Aorta (tissue), 5 donors: ENCODE measurements at regions of chr12 and their contacts with region 1.

Region 1: DNA sequence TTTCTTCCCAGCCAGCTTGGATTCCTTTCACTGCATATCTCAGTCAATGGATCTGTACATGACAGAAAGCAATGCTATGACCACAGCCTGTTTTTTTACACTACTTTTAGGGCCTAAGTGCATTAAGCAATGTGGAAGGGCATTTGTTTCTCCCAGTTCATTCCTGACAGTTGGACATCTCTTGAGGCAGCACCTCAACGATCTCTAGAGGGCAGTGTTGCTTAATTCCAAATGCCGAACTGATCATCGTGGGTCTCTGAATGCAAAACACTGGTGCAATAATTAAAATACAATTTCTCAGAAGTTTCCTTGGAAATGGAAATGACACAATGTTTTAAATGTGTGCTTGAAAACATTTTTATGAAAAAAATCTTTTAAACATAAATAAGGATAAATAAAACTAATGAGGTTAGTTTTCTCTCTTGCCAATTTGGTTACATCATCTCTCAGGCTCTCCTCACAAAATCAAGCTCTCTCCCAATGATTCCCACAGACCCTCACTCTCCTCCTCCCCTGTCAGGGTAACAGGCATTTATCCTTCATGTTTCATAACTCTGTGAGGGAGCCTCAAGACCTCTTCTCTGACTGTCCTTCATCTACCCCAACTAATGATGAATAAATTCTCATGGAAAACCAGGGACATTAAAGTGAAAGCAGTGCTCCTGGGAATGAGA is 192.4 kb upstream of the SLC16A7 start:
- DNase-seq: peak in 1 of 2 donors; percentile 43
- ATAC-seq: peak; percentile 88
- H3K4me3 ChIP-seq: peak overlapping the region in 1 of 2 donors; percentile 54
- H3K27ac ChIP-seq: no peak overlapping the region
- H3K4me1 ChIP-seq: no peaks in the 10 kb centered on the region
- H3K27me3 ChIP-seq: no peaks in the 10 kb centered on the region

Region 2: GRCh38 chr12:59164991-59165718 is 238.2 kb before region 1 on chr12:
- intact Hi-C with region 1: no loop called
- DNase-seq: no peak
- ATAC-seq: no peak
- H3K4me3 ChIP-seq: no peak overlapping the region
- H3K27ac ChIP-seq: no peak overlapping the region
- H3K4me1 ChIP-seq: no peaks in the 10 kb centered on the region
- H3K27me3 ChIP-seq: no peaks in the 10 kb centered on the region

Region 3: GRCh38 chr12:59695379-59695778 is 292.0 kb after region 1 on chr12:
- intact Hi-C with region 1: no loop called
- DNase-seq: no peak
- ATAC-seq: no peak
- H3K4me3 ChIP-seq: no peak overlapping the region
- H3K27ac ChIP-seq: no peak overlapping the region
- H3K4me1 ChIP-seq: no peaks in the 10 kb centered on the region
- H3K27me3 ChIP-seq: no peaks in the 10 kb centered on the region

Region 4: GRCh38 chr12:59808317-59808910 is 405.0 kb after region 1 on chr12:
- intact Hi-C with region 1: loop called in 1 of 2 experiments (anchors 5 kb)
- DNase-seq: no peak
- ATAC-seq: peak; percentile 80
- H3K4me3 ChIP-seq: no peak overlapping the region
- H3K27ac ChIP-seq: no peak overlapping the region
- H3K4me1 ChIP-seq: no peaks in the 10 kb centered on the region
- H3K27me3 ChIP-seq: no peaks in the 10 kb centered on the region

Region 5: GRCh38 chr12:59834659-59835474 is 431.5 kb after region 1 on chr12:
- intact Hi-C with region 1: loop called (anchors 5 to 10 kb)
- DNase-seq: no peak
- ATAC-seq: no peak
- H3K4me3 ChIP-seq: no peak overlapping the region
- H3K27ac ChIP-seq: no peak overlapping the region
- H3K4me1 ChIP-seq: no peaks in the 10 kb centered on the region
- H3K27me3 ChIP-seq: no peaks in the 10 kb centered on the region

Region 6: GRCh38 chr12:60494244-60494643 is 1090.8 kb after region 1 on chr12:
- intact Hi-C with region 1: loop called in 1 of 2 experiments (anchors 10 kb)
- DNase-seq: no peak
- ATAC-seq: no peak
- H3K4me3 ChIP-seq: no peak overlapping the region
- H3K27ac ChIP-seq: no peak overlapping the region
- H3K4me1 ChIP-seq: no peaks in the 10 kb centered on the region
- H3K27me3 ChIP-seq: no peaks in the 10 kb centered on the region